Transverse colon (tissue), 4 donors: ENCODE measurements at regions of chr19 and their contacts with region 1.

Region 1: GRCh38 chr19:18167975-18168645 is 5.5 kb upstream of the IFI30 start:
- DNase-seq: peak; percentile 61
- H3K4me3 ChIP-seq: no peak overlapping the region
- H3K27ac ChIP-seq: no peak overlapping the region
- H3K4me1 ChIP-seq: peaks cover 0 to 8% (median 5%) of the 10 kb centered on the region in 4 donors
- H3K27me3 ChIP-seq: no peaks in the 10 kb centered on the region
- CTCF ChIP-seq: peak; percentile 71 to 78 (median 75)
- EP300 ChIP-seq: no peak
- POLR2A ChIP-seq: no peak

Region 2: DNA sequence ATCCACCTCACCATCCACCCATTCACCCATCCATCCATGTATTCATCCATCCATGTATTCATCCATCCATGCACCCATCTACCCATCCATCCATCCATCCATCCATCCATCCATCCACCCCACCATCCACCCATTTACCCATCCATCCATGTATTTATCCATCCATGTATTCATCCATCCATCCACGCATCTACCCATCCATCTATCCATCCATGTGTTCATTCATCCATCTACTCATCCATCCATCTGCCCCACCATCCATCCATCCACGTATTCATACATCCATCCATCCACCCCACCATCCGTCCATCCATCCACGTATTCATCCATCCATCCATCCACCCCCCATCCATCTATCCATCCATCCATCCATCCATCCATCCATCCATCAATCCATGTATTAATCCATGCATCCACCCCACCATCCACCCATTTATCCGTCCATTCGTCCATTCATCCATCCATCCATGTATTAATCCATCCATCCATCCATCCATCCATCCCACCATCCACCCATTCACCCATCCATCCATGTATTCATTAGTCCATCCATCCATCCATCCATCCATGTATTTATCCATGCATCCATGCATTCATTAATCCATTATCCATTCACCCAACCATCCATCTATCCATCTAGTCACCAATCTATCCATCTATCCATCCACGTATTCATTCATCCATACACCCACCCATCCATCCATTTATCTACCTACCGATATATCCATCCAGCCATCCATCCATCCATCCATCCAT is 84.0 kb before region 1 on chr19:
- in situ Hi-C with region 1: no loop called
- intact Hi-C with region 1: no loop called
- DNase-seq: no peak
- H3K4me3 ChIP-seq: no peak overlapping the region
- H3K27ac ChIP-seq: no peak overlapping the region
- H3K4me1 ChIP-seq: no peaks in the 10 kb centered on the region
- H3K27me3 ChIP-seq: no peaks in the 10 kb centered on the region
- CTCF ChIP-seq: no peak
- EP300 ChIP-seq: no peak
- POLR2A ChIP-seq: no peak

Region 3: GRCh38 chr19:18503971-18504885 is 336.1 kb after region 1 on chr19:
- in situ Hi-C with region 1: no loop called
- intact Hi-C with region 1: loop called (anchors 5 kb)
- DNase-seq: peak; percentile 77
- H3K4me3 ChIP-seq: no peak overlapping the region
- H3K27ac ChIP-seq: peak overlapping the region; percentile 70 to 79 (median 77)
- H3K4me1 ChIP-seq: peaks cover 82 to 100% (median 93%) of the 10 kb centered on the region in 4 donors
- H3K27me3 ChIP-seq: no peaks in the 10 kb centered on the region
- CTCF ChIP-seq: no peak
- EP300 ChIP-seq: no peak
- POLR2A ChIP-seq: peak; percentile 32